Naive thymus-derived CD4-positive, alpha-beta T cell (primary cell): ENCODE measurements at regions of chr15 and their contacts with region 1.

Region 1: GRCh38 chr15:51737280-51738017 is at the start of gene LYSMD2:
- DNase-seq: peak; percentile 56 to 78 (median 66)
- ATAC-seq: peak; percentile 73
- H3K4me3 ChIP-seq: peak within 1 kb of the TSS; percentile 71
- H3K4me3 Mint-ChIP-seq: peak within 1 kb of the TSS; percentile 87 to 96 (median 94)
- H3K27ac ChIP-seq: peak within 1 kb of the TSS; percentile 84
- H3K27ac Mint-ChIP-seq: peak within 1 kb of the TSS; percentile 86 to 98 (median 96)
- H3K4me1 ChIP-seq: peaks cover 28 to 34% of the 10 kb centered on the region in 2 donors
- H3K4me1 Mint-ChIP-seq: peaks cover 47 to 71% (median 63%) of the 10 kb centered on the region in 7 donors
- H3K27me3 ChIP-seq: no peaks in the 10 kb centered on the region
- H3K27me3 Mint-ChIP-seq: no peaks in the 10 kb centered on the region
- total RNA-seq, gene LYSMD2: 12.5 to 33.8 (median 17.8) TPM

Region 2: DNA sequence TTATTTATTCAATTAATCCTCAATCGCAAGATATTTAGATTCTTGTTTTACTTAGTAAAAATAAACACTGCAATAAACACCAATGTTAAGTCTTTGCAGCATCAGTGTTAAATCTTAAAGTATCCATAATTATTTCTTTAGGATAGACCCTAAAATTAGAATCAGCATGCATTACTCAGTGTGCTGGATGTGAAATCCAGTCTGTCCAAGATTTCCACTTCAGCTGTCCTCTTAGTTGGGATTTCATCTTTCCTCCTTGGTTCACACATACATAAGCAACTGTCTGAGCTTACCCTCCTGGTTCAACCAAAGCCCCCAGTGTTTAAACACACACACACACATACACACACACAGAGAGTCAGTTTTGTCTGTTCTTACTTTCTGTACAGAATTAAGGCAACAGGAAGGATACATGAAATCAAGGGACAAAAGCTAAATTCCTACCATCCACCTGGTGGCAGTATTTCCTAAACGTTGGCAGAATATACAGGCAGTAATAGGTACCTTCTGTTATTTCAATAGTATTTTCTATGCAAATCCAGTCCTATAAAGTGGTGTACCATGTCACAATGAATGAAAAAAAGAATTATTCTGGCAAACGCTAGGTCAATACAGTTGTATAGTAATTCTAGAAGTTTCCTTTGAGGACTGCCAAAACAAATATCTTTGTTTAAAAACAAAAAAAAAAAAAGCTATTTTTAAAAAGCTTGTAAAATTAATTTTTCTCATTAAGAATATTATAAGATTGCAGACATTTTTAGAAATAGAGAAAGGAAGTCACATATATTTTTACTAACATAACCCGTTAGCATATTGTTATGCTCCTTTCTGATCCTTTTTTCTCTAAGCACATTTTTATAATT is 87.6 kb before region 1 on chr15:
- CTCF ChIA-PET with region 1: interaction called, 36 read pairs
- POLR2A ChIA-PET with region 1: interaction called, 6 read pairs
- intact Hi-C with region 1: loop called (anchors 1 to 2 kb)
- DNase-seq: peak in 7 of 9 donors; percentile 53 to 76 (median 68)
- ATAC-seq: peak; percentile 86
- H3K4me3 ChIP-seq: no peak overlapping the region
- H3K4me3 Mint-ChIP-seq: no peak overlapping the region
- H3K27ac ChIP-seq: no peak overlapping the region
- H3K27ac Mint-ChIP-seq: no peak overlapping the region
- H3K4me1 ChIP-seq: no peaks in the 10 kb centered on the region
- H3K4me1 Mint-ChIP-seq: no peaks in the 10 kb centered on the region
- H3K27me3 ChIP-seq: no peaks in the 10 kb centered on the region
- H3K27me3 Mint-ChIP-seq: peaks cover 0 to 17% (median 0%) of the 10 kb centered on the region in 5 donors

Region 3: DNA sequence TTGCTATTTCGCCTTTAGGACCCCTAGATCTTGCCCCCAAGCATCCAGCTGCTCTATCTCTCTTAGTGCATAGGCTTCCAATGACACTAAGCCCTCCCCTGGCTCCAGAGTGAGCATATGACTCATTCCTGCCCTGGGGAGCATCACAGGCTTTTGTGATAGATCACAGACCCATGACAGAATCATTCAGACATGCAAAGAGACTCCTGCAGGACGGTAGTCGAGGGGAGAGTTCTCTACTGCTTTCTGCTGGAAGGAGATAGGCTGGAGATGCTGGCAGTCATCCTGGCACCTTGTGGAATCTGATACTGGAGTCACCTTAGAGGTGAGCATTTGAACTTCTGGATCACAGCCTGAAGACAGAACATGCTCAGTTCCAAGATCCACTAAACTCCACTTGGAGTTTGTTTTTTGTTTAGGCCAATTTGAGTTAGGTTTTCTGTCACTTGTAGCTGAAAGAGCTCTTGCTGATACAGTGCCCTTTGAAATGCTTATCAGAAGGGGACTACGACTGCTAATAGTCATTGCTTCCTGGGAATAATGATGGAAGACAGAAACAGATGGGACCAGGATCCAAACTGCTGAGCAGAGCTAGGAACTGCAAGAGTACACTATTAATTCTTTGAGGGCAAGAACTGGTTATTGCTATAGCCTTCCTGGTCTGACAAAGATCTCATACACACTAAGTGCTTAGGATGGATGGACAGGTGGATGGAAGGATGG is 10.9 kb before region 1 on chr15:
- CTCF ChIA-PET with region 1: interaction called, 3 read pairs
- POLR2A ChIA-PET with region 1: interaction called, 14 read pairs
- intact Hi-C with region 1: no loop called
- DNase-seq: no peak
- ATAC-seq: peak; percentile 41
- H3K4me3 ChIP-seq: no peak overlapping the region
- H3K4me3 Mint-ChIP-seq: peak overlapping the region in 7 of 10 donors; percentile 14 to 50 (median 43)
- H3K27ac ChIP-seq: no peak overlapping the region
- H3K27ac Mint-ChIP-seq: peak overlapping the region in 6 of 9 donors; percentile 30 to 86 (median 65)
- H3K4me1 ChIP-seq: peaks cover 26 to 33% of the 10 kb centered on the region in 2 donors
- H3K4me1 Mint-ChIP-seq: peaks cover 36 to 82% (median 75%) of the 10 kb centered on the region in 7 donors
- H3K27me3 ChIP-seq: no peaks in the 10 kb centered on the region
- H3K27me3 Mint-ChIP-seq: no peaks in the 10 kb centered on the region

Region 4: GRCh38 chr15:51776952-51777574 is 39.6 kb after region 1 on chr15:
- CTCF ChIA-PET with region 1: interaction called, 20 read pairs
- POLR2A ChIA-PET with region 1: interaction called, 8 read pairs
- intact Hi-C with region 1: loop called (anchors 1 to 2 kb)
- DNase-seq: peak in 8 of 9 donors; percentile 37 to 74 (median 64)
- ATAC-seq: peak; percentile 86
- H3K4me3 ChIP-seq: no peak overlapping the region
- H3K4me3 Mint-ChIP-seq: no peak overlapping the region
- H3K27ac ChIP-seq: no peak overlapping the region
- H3K27ac Mint-ChIP-seq: no peak overlapping the region
- H3K4me1 ChIP-seq: no peaks in the 10 kb centered on the region
- H3K4me1 Mint-ChIP-seq: peaks cover 0 to 12% (median 6%) of the 10 kb centered on the region in 7 donors
- H3K27me3 ChIP-seq: no peaks in the 10 kb centered on the region
- H3K27me3 Mint-ChIP-seq: no peaks in the 10 kb centered on the region

Region 5: DNA sequence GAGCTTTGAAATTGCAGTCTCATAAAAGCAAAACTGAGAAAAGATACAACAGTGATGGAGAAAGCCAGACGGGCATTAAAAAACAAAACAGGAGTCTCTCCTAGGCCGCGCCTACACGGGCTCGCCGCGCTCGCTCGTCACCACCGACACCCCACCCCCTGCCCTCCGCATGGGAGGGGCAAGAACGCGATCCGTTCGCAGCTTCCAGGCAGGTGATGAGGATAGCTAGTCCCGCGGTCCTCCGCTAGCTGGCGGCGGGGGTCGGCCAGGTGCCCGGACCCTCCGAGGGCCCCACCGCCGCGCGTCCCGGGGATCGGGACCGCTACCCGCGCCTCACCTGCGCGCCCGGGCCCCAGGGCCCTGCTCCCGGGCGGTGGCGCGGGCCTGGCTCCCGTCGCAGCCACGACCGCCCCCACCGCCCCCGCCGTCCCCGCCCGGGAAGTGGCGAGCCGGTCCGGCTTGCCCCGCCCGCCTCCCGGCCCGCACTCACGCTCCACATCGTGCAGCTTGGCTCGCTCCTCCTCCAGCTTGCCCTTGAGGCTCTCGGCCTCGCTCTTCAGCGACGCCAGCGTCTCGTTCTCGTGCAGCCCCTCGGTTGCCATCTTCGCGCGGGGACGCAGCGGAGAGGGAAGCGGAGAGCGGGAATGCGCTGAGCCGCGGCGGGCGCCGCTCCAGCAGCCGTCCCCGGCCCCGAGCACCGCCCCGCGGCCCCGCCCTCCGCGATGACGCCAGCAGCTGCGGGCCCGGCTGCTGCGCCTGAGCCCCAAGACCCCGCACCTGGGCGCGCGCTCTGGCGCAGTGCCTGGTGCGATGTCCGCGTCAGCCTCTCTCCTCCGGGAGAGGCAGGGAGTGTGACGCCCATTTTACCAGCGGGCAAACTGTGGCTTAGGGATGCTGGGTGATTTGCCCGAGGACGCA is 442.1 kb after region 1 on chr15:
- CTCF ChIA-PET with region 1: no interaction called
- POLR2A ChIA-PET with region 1: interaction called, 13 read pairs
- intact Hi-C with region 1: loop called in 1 of 2 experiments (anchors 5 kb)
- DNase-seq: peak; percentile 79 to 92 (median 91)
- ATAC-seq: peak; percentile 91
- H3K4me3 ChIP-seq: peak overlapping the region; percentile 98
- H3K4me3 Mint-ChIP-seq: peak overlapping the region; percentile 86 to 100 (median 94)
- H3K27ac ChIP-seq: peak overlapping the region; percentile 95
- H3K27ac Mint-ChIP-seq: peak overlapping the region; percentile 90 to 99 (median 98)
- H3K4me1 ChIP-seq: peaks cover 19 to 20% of the 10 kb centered on the region in 2 donors
- H3K4me1 Mint-ChIP-seq: peaks cover 14 to 50% (median 40%) of the 10 kb centered on the region in 7 donors
- H3K27me3 ChIP-seq: no peaks in the 10 kb centered on the region
- H3K27me3 Mint-ChIP-seq: no peaks in the 10 kb centered on the region

Region 6: DNA sequence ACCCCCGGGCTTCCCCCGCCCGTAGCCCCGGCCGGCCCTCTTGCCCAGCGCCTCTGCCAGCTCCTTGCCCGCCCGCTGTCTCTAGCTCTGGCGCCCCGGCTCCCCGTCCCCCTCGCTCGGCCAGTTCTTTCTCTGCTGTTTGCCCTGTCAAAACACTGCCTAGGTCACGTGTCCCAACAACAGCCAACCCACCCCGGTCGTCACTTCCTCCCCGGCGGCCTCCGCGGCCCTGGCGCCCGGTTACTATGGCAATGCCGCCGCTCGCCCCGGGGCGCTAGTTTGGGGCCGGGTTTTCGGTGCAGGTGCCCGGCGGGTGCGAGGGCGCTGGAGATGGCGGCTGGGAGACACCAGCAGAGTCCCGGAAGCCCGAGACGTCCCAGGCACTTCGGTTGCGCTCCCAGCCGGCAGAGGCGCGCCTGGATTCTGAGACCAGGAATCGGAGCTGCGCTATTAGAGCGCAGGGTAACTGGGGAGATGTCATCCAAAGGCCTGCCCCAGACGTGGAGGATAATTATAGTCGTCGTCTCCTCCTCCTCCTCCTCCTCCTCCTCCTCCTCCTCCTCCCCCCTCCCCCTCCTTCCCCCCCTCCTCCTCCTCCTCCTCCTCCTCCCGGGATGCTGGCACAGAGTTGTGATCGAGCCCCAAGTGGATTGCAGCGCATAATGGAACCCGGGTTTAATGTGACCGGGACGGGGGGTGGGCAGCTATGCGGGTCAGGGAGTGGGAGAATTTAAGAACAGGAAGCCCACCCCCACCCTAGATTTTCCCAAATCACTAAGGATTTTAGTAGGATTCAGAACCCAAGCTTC is 942.0 kb after region 1 on chr15 and contains the start of gene ATOSA:
- CTCF ChIA-PET with region 1: no interaction called
- POLR2A ChIA-PET with region 1: no interaction called
- intact Hi-C with region 1: loop called in 1 of 2 experiments (anchors 2 kb)
- DNase-seq: peak; percentile 84 to 93 (median 90)
- ATAC-seq: peak; percentile 87
- H3K4me3 ChIP-seq: peak within 1 kb of the TSS; percentile 82
- H3K4me3 Mint-ChIP-seq: peak within 1 kb of the TSS; percentile 91 to 100 (median 96)
- H3K27ac ChIP-seq: peak within 1 kb of the TSS; percentile 99
- H3K27ac Mint-ChIP-seq: peak within 1 kb of the TSS; percentile 94 to 100 (median 99)
- H3K4me1 ChIP-seq: peaks cover 35 to 54% of the 10 kb centered on the region in 2 donors
- H3K4me1 Mint-ChIP-seq: peaks cover 31 to 61% (median 46%) of the 10 kb centered on the region in 7 donors
- H3K27me3 ChIP-seq: no peaks in the 10 kb centered on the region
- H3K27me3 Mint-ChIP-seq: peaks cover 0 to 12% (median 0%) of the 10 kb centered on the region in 5 donors
- total RNA-seq, gene ATOSA: 35.1 to 117 (median 95.7) TPM